Ascending aorta (tissue), 2 donors: ENCODE measurements at regions of chr3 and their contacts with region 1.

Region 1: GRCh38 chr3:56556908-56557830 is at the start of gene CCDC66:
- DNase-seq: peak; percentile 84 to 96
- H3K4me3 ChIP-seq: peak within 1 kb of the TSS; percentile 70 to 88
- H3K27ac ChIP-seq: peak within 1 kb of the TSS; percentile 84 to 89
- H3K4me1 ChIP-seq: peaks cover 5 to 10% of the 10 kb centered on the region in 2 donors
- H3K27me3 ChIP-seq: no peaks in the 10 kb centered on the region
- CTCF ChIP-seq: peak; percentile 27 to 65 (median 64)
- total RNA-seq, gene CCDC66: 11.4 TPM

Region 2: DNA sequence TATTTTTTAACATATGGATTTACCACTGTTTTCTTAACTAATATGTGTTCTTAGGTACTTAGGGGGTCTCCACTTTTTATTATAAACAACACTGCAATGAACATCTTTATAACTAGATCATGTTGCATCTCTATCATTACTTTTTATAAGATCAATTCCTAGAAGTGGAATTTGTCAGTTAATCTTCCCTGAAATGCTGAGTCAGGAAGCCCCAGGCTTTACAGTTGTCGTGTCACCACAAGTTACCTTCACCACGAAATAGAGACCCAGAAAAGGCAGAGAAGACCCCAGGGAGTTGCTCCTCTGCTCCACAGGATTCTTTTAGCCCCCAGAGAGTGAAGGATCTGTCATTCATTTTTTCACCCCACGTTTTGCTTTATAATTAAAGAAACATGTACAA is 54.4 kb before region 1 on chr3:
- intact Hi-C with region 1: no loop called
- DNase-seq: no peak
- H3K4me3 ChIP-seq: no peak overlapping the region
- H3K27ac ChIP-seq: no peak overlapping the region
- H3K4me1 ChIP-seq: no peaks in the 10 kb centered on the region
- H3K27me3 ChIP-seq: no peaks in the 10 kb centered on the region
- CTCF ChIP-seq: no peak

Region 3: GRCh38 chr3:56682462-56683121 is 125.4 kb after region 1 on chr3:
- intact Hi-C with region 1: loop called (anchors 5 kb)
- DNase-seq: peak in 1 of 2 donors; percentile 82
- H3K4me3 ChIP-seq: peak overlapping the region; percentile 74 to 82
- H3K27ac ChIP-seq: peak overlapping the region; percentile 95 to 99
- H3K4me1 ChIP-seq: peaks cover 0 to 3% of the 10 kb centered on the region in 2 donors
- H3K27me3 ChIP-seq: no peaks in the 10 kb centered on the region
- CTCF ChIP-seq: no peak

Region 4: DNA sequence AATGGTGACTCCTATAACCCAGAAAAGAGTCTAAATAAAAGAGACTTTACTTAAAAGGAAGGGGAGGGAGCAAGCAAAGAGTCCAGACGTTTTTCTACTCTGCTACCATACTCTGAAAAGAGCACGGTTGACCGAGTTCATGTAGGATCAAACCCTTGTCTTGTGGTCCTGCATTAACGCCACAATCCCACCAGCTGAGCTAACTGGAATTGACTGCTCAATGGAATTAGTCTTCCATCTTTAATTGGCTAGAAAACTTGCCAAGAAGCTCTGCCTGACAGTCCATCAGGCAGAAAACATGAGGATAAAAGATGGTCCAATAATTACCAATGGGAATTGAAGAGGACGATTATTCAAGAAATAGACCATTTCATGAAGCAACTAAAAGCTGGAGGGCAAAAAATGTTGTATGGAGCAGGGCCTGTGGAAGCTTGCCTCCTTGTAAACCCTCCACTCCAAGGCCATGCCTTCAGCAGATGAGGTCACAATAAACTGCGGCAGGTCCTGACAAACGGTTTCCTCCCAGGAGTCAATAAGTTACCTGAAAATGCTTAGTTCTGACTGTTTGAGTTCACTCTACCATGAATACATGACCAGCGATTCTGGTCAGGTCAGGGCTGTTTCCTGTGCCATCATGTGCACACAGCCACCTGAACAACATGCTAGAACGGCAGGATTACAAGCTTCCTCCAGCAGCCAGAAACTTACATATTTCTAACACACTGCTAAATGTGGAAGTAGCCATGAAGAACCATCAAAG is 280.2 kb after region 1 on chr3:
- intact Hi-C with region 1: no loop called
- DNase-seq: no peak
- H3K4me3 ChIP-seq: no peak overlapping the region
- H3K27ac ChIP-seq: no peak overlapping the region
- H3K4me1 ChIP-seq: no peaks in the 10 kb centered on the region
- H3K27me3 ChIP-seq: no peaks in the 10 kb centered on the region
- CTCF ChIP-seq: no peak

Region 5: GRCh38 chr3:57007513-57008460 is 450.6 kb after region 1 on chr3:
- intact Hi-C with region 1: loop called (anchors 10 kb)
- DNase-seq: peak; percentile 55 to 90
- H3K4me3 ChIP-seq: peak overlapping the region; percentile 33 to 36
- H3K27ac ChIP-seq: peak overlapping the region; percentile 87
- H3K4me1 ChIP-seq: peaks cover 12 to 24% of the 10 kb centered on the region in 2 donors
- H3K27me3 ChIP-seq: no peaks in the 10 kb centered on the region
- CTCF ChIP-seq: no peak